ENCODE measurements at regions of chr1 and their contacts with region 1.

Region 1: DNA sequence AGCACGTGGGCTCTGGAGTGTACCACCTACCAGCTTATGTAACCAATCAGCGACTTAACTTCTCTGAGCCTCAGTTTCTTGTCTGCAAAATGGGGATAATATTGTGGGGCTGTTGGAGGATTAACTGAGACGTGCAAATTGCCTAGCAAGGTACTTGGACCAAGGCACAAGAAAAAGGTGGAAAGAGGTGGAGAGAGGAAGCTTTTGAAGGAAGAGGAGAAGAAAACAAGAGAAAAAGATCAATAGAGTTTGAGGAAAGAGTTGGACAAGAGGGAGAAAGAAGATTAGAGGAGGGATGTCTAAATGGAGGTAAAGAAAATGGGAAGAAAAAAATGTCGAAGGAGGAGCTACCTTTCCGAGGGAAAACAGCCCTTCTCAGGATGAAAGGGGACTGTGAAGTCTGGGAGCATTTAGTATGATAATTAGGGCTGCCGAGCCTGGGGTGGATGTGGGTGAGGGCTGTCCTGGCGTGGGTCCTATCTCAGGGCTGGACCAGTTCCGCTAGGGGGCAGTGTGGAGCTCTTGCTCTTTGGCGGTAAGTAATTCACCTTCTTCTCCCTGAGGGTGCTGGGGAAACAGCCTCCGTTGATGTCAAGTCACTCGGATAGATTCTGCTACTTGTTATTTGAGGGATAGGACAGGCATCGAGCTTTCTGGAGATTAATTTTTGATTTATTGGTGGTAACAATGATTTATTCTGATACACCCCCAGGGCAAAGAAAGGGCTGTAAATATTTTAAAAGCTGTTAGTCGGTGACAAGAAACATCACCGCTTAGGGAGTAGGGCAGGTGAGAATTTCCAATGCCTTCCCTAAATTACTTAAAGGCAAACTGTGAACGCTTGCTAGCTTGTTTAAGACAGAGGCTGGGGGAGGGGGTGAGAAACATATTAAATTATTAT is 79.0 kb upstream of the NFASC start:
- DNase-seq: peak; percentile 74
- CTCF ChIP-seq: peak; percentile 85

Region 2: GRCh38 chr1:204685236-204686006 is 106.3 kb before region 1 on chr1 and contains the start of gene LRRN2:
- CTCF ChIA-PET with region 1: no interaction called
- POLR2A ChIA-PET with region 1: no interaction called
- DNase-seq: no peak
- CTCF ChIP-seq: no peak

Region 3: DNA sequence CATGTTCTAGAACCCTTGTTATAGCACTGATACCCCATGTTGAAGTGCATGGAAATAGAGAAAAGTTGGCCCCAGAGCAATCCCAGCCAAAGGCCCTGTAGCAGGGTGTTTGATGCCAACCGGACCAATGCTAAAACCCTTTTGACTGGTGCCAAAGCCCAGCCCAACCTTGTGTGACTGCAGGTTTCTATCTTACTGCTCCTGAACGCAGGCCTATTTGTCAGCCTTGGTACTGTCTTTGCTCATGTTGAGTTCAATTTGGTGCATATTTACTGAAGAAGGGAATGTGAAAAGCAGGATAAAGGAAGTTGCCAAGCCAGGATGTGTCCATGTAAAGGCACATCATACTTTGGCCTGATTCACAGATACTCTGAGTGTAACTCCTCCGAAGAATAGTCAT is 27.3 kb after region 1 on chr1:
- CTCF ChIA-PET with region 1: interaction called, 14 read pairs
- POLR2A ChIA-PET with region 1: no interaction called
- DNase-seq: no peak
- CTCF ChIP-seq: no peak

Measured in GM10248 (cell line).